Left ventricle myocardium superior (tissue), 1 donor: ENCODE measurements at regions of chr18 and their contacts with region 1.

Region 1: DNA sequence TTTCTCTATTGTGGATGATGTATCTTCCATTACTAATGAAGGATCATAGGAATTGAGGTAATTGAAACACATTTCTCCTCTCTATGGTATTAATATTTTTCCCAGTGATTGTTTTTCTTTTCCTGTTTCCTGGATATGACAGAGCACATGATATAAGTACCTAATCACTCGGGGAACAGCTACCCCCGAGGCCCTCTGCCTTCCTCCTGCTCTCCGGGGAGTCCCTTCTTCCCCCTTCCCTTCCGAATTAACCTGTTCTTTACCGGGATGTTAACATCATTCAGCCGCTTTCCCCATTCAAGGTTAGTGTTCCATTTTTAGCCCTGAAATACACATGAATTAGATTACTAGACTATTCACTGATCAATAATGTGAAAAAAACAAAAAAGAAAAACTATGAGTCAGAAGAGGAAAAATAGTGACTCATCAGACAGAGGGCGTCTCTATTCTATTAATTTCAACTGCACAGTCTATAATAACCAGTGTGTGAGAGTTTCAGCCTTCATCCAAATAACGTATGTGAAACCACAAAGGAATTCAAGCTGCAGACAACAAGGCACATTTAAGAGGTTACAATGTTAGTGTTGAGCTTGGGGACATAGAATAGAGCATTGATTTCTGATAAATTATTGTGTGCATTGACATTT is 450.8 kb downstream of the DLGAP1 start:
- DNase-seq: no peak
- ATAC-seq: no peak

Region 2: GRCh38 chr18:3297025-3297984 is 707.0 kb before region 1 on chr18:
- intact Hi-C with region 1: loop called (anchors 10 kb)
- DNase-seq: peak; percentile 85
- ATAC-seq: peak; percentile 93

Region 3: GRCh38 chr18:3947383-3947782 is 56.9 kb before region 1 on chr18:
- intact Hi-C with region 1: no loop called
- DNase-seq: no peak
- ATAC-seq: no peak

Region 4: GRCh38 chr18:3966985-3967856 is 37.1 kb before region 1 on chr18:
- intact Hi-C with region 1: no loop called
- DNase-seq: peak; percentile 57
- ATAC-seq: peak; percentile 95